Dorsolateral prefrontal cortex (tissue), 120 donors: ENCODE measurements at regions of chr1 and their contacts with region 1.

Region 1: GRCh38 chr1:6245086-6245868 is 1.3 kb downstream of the HES3 start:
- DNase-seq: peak in 6 of 10 donors; percentile 51 to 77 (median 58)
- H3K4me3 ChIP-seq: peak overlapping the region in 22 of 59 donors; percentile 1 to 40 (median 17)
- H3K27ac ChIP-seq: no peak overlapping the region
- H3K27me3 ChIP-seq: peaks cover 0 to 95% (median 70%) of the 10 kb centered on the region in 45 donors
- CTCF ChIP-seq: peak; percentile 43 to 83 (median 73)

Region 2: GRCh38 chr1:6343506-6344405 is 98.5 kb after region 1 on chr1:
- intact Hi-C with region 1: loop called (anchors 1 to 5 kb)
- DNase-seq: peak in 8 of 10 donors; percentile 40 to 72 (median 67)
- H3K4me3 ChIP-seq: no peak overlapping the region
- H3K27ac ChIP-seq: no peak overlapping the region
- H3K27me3 ChIP-seq: no peaks in the 10 kb centered on the region
- CTCF ChIP-seq: peak; percentile 40 to 88 (median 74)

Region 3: GRCh38 chr1:6401673-6402072 is 156.4 kb after region 1 on chr1:
- intact Hi-C with region 1: loop called in 1 of 2 experiments (anchors 1 kb)
- DNase-seq: no peak
- H3K4me3 ChIP-seq: no peak overlapping the region
- H3K27ac ChIP-seq: no peak overlapping the region
- H3K27me3 ChIP-seq: peaks cover 0 to 5% (median 0%) of the 10 kb centered on the region in 45 donors
- CTCF ChIP-seq: no peak

Region 4: DNA sequence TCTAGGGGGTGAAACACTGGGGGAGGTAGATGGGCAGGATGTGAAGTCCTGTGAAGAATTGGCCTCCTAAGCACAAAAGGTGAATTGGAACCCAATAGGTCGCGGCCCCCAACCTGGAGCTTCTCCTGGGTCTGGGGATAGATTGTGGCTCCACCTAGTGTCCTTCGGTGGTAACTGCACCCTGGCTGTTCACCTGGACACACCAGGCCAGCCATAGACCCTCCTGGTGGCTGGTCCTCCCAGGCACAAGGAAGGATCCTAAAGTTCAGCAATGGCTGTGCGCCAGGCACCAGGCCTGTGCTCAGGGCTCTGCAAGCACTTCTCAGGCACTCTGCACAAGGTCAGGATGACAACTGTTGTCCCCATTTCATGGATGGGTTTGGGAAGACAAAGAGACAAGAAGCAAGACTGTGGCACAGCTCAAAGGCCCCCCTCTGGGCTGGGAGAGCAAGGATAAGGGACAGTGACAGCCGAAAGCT is 192.8 kb after region 1 on chr1:
- intact Hi-C with region 1: no loop called
- DNase-seq: peak in 8 of 10 donors; percentile 43 to 75 (median 66)
- H3K4me3 ChIP-seq: no peak overlapping the region
- H3K27ac ChIP-seq: peak overlapping the region in 1 of 59 donors; percentile 18
- H3K27me3 ChIP-seq: peaks cover 0 to 37% (median 17%) of the 10 kb centered on the region in 45 donors
- CTCF ChIP-seq: peak; percentile 65 to 98 (median 93)

Region 5: DNA sequence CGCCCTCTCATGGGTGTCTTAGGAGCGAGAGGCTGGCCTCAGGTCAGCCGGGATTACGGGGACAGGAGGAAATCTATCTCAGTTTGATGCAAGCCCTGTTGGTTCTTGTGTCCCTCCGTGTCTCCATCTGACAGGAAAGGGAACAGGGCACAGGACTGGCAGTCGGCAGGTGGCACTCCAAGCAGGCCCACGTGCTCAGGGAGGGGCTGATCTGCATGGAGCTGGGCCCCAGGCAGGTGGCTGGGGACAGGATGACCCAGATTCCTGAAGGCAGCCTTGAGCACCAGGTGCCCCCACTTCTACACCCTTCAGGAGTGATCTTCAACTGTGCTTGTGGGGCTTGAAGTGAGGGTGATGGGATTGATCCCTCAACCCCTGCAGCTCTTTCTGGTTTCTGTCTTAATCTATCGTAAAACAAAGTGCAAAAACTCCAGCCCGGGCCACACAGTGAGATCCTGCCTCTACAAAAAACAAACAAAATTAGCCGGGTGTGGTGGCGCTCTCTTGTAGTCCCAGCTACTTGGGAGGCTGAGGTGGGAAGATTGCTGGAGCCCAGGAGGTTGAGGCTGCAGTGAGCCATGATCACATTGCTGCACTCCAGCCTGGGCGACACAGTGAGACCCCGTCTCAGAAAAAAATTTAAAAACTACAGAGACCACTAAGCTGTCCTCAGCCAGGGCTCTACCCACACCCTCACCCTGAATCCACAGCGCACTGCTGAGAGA is 237.9 kb after region 1 on chr1:
- intact Hi-C with region 1: loop called in 1 of 2 experiments (anchors 5 kb)
- DNase-seq: peak in 1 of 10 donors; percentile 96
- H3K4me3 ChIP-seq: no peak overlapping the region
- H3K27ac ChIP-seq: peak overlapping the region in 1 of 59 donors; percentile 92
- H3K27me3 ChIP-seq: peaks cover 0 to 22% (median 4%) of the 10 kb centered on the region in 45 donors
- CTCF ChIP-seq: no peak